Mammary epithelial cell (primary cell): ENCODE measurements at regions of chr1 and their contacts with region 1.

Region 1: DNA sequence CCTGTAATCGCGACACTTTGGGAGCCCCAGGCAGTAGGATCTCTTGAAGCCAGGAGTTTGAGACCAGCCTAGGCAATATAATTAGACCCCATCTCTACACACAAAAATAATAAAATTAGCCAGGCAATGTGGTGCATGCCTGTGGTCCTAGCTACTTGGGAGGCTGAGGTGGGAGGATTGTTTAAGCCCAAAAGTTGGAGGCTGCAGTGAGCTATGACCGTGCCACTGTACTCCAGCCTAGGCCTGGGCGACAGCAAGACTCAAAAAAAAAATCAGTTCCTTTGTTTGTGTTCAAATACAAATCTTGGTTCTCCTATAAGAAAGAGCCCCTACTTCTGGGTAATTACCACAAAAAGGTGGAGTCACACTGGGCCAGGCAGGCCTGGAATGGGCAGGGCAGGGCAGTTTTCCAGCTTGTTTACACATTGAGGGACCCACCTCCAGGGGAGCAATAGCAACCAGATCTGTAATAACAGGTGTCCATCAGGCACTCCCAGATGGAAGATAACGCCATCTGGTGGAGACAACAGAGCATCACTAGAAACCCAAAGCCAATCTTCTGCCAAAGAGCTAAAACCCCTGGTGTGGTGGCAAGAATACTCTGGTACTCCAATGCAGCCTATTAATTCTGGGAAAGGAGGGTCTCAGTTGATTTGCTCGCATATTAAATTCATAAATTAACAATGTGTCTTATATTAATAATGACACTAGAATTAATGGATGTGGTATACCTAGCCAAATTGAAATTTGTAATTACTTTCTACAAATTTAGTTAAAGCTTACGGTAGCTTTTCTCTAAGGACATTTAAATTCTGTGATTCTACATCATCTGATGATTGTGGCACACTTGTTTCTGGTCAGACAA is 13.2 kb downstream of the PPP1R15B start:
- DNase-seq: peak; percentile 75
- H3K4me3 ChIP-seq: no peak overlapping the region
- H3K27ac ChIP-seq: no peak overlapping the region
- H3K4me1 ChIP-seq: no peaks in the 10 kb centered on the region
- H3K27me3 ChIP-seq: no peaks in the 10 kb centered on the region
- CTCF ChIP-seq: peak; percentile 90

Region 2: GRCh38 chr1:203926025-203926540 is 472.4 kb before region 1 on chr1:
- CTCF ChIA-PET with region 1: interaction called, 10 read pairs
- dilution Hi-C with region 1: no loop called
- in situ Hi-C with region 1: no loop called
- intact Hi-C with region 1: no loop called
- DNase-seq: peak; percentile 45
- H3K4me3 ChIP-seq: no peak overlapping the region
- H3K27ac ChIP-seq: peak overlapping the region; percentile 54
- H3K4me1 ChIP-seq: peaks cover 3% of the 10 kb centered on the region
- H3K27me3 ChIP-seq: no peaks in the 10 kb centered on the region
- CTCF ChIP-seq: no peak

Region 3: DNA sequence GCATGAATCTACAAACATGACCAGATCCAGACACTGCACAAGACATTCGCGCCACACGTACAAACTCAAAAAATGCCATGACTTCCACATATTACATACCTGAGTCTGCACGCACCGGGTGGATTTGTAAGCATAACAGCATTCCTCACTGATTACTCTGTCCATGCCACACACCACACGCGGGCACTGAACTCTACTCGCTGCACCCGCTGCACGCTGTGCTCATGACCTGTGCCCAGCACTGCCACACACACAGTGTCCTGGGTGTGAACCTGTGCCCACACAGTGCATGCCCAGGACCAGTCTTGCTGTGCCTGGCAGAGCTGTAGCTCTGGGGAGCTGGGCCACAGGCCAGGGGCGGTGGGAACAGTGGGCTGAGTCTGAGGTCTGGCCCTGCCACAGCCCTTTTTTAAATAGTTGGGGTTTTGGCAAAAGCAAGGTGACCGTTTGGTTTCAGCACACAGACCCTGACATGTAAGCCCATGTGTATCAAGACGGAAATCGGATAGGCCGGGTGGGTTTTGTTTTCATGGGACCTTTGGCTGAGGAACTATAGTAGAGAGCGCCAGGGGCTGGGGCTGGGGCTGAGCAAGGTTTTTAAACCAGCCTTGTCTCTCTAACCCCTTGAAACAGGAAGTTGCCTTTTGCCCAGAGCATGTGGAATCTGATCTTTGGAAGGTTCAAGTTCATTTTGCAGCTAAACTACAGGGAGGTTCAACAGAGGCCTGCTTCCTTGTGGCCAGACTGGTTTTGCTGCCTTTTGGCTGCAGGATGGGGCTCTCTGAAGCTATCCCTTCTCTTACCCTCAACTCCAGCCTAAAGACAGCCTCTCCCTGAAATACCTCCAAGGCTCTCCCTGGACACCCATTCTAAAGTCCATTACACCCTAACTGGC is 172.4 kb before region 1 on chr1:
- CTCF ChIA-PET with region 1: no interaction called
- dilution Hi-C with region 1: no loop called
- in situ Hi-C with region 1: no loop called
- intact Hi-C with region 1: no loop called
- DNase-seq: peak; percentile 76
- H3K4me3 ChIP-seq: no peak overlapping the region
- H3K27ac ChIP-seq: no peak overlapping the region
- H3K4me1 ChIP-seq: peaks cover 19% of the 10 kb centered on the region
- H3K27me3 ChIP-seq: no peaks in the 10 kb centered on the region
- CTCF ChIP-seq: no peak

Region 4: DNA sequence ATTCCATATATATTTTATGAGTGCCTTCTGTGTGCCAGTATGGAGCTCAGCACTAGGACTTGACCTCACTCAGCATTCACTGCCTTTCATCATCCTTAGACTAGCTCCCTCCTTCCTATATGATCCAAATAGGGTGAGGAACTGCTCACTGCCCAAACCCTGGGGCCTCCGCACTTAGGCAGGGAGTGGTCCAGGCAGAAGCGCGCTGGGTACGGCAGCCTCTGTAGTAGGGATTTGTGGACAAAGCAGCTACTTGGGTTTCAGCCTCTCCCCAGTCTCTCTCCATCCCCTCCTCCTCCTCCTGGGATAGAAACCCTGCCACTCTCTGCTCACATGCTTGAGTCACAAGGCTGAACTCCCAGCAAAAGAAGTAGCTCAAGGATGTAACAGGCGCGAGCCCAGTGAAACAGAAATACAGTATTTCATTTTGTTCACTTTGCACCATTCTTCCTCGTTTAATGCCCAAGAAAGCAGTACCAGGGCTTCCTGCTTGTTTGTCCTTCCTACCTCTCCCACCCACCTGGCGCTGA is 71.6 kb before region 1 on chr1:
- CTCF ChIA-PET with region 1: no interaction called
- dilution Hi-C with region 1: no loop called
- in situ Hi-C with region 1: no loop called
- intact Hi-C with region 1: no loop called
- DNase-seq: no peak
- H3K4me3 ChIP-seq: no peak overlapping the region
- H3K27ac ChIP-seq: no peak overlapping the region
- H3K4me1 ChIP-seq: peaks cover 14% of the 10 kb centered on the region
- H3K27me3 ChIP-seq: no peaks in the 10 kb centered on the region
- CTCF ChIP-seq: no peak

Region 5: DNA sequence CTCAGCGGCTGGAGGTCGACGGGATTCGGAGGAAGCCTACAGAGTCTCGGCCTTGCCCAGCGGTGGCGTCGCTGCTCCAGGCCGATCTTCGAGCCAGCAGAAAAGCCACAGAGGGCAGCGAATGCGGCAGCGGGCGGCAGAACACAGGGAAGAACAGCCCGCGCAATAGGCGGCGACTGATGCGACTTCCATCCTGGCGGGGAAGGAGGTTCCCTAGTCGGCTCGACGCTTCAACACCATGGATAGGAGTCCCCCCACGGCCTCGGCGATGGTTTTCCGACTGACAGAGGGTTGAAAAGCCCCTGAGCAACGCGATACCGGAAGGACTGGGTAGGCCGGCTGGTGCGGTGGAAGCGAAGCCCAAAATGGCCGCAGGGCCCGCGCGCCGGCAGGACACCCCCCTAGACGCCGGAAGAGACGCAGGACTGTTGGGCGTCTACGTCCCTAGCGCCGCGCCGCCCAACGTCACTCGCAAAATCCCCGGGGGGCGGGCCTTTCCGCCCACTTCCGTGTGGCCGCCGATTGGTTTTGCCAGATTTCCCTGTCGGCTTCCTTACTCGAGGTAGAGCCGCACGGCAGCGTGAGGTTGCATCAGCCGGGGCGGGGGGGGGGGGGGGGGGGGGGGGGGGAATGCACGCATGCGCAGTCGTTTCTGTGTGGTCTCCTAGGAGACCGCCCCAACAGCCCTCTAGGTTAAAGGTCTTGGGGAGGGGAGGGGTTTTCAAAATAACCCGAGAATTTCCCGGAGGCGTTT is 13.2 kb after region 1 on chr1 and contains the start of gene PPP1R15B:
- CTCF ChIA-PET with region 1: interaction called, 4 read pairs
- dilution Hi-C with region 1: no loop called
- in situ Hi-C with region 1: no loop called
- intact Hi-C with region 1: loop called (anchors 1 kb)
- DNase-seq: peak; percentile 99
- H3K4me3 ChIP-seq: peak within 1 kb of the TSS; percentile 64 to 99 (median 85)
- H3K27ac ChIP-seq: peak within 1 kb of the TSS; percentile 99
- H3K4me1 ChIP-seq: peaks cover 13% of the 10 kb centered on the region
- H3K27me3 ChIP-seq: no peaks in the 10 kb centered on the region
- CTCF ChIP-seq: no peak
- total RNA-seq, gene PPP1R15B: 33.4 to 37.5 TPM

Region 6: GRCh38 chr1:204446370-204447111 is 48.1 kb after region 1 on chr1:
- CTCF ChIA-PET with region 1: no interaction called
- dilution Hi-C with region 1: loop called (anchors 5 kb)
- in situ Hi-C with region 1: no loop called
- intact Hi-C with region 1: no loop called
- DNase-seq: no peak
- H3K4me3 ChIP-seq: no peak overlapping the region
- H3K27ac ChIP-seq: no peak overlapping the region
- H3K4me1 ChIP-seq: peaks cover 32% of the 10 kb centered on the region
- H3K27me3 ChIP-seq: no peaks in the 10 kb centered on the region
- CTCF ChIP-seq: peak; percentile 39 to 57